ENCODE measurements at regions of chr11 and their contacts with region 1.

Region 1: GRCh38 chr11:10730151-10730550 is 20.9 kb upstream of the CTR9 start:
- DNase-seq: no peak
- ATAC-seq: no peak
- H3K4me3 ChIP-seq: no peak overlapping the region
- H3K4me1 ChIP-seq: no peaks in the 10 kb centered on the region
- CTCF ChIP-seq: no peak

Region 2: DNA sequence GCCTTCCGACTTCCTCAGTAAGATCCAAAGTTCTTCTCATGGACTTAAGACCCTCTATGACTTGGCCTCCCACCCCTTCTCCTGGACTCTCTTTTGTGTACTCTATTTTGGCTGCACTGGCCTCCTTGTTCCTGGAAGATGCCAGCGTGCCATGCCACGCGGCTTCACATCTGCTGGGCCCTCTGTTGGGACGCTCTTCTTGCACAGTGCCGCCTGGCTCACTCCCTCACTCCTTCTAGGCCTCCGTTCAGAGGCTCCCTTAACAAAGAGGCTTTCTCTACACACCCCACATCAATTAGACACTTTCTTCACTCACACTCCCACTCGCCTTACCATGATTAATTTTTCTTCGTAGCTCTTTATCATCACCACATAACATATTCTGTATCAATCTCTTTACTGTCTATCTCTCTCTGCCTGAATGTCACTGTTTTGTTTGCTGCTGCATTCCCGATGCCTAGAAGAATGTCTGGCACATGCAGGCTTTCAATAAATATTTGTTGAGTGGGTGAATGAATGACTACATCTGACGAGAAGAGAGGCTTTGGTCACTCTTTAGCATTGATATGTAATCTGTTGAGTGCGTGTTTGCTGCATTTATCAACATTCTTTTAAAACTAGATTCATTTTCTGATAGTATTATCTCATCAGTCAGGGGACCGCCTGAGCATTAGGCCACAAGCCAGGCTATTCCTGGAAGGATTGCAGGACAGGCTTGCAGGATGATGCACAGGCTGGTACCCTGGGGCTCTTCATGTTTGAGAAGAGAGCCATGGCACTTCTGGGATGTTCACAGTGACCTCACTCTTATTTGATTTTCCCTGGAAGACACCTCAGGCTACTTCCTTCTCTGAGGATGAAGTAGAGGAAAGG is 335.7 kb before region 1 on chr11:
- intact Hi-C with region 1: no loop called
- DNase-seq: no peak
- ATAC-seq: no peak
- H3K4me3 ChIP-seq: no peak overlapping the region
- H3K4me1 ChIP-seq: no peaks in the 10 kb centered on the region
- CTCF ChIP-seq: no peak

Region 3: GRCh38 chr11:10405855-10406592 is 324.1 kb before region 1 on chr11:
- intact Hi-C with region 1: loop called (anchors 5 kb)
- DNase-seq: peak in 1 of 3 donors; percentile 70
- ATAC-seq: peak; percentile 84
- H3K4me3 ChIP-seq: no peak overlapping the region
- H3K4me1 ChIP-seq: no peaks in the 10 kb centered on the region
- CTCF ChIP-seq: no peak

Measured in mucosa of descending colon (tissue), 3 donors.